HCT116 (cell line): ENCODE measurements at regions of chr13 and their contacts with region 1.

Region 1: DNA sequence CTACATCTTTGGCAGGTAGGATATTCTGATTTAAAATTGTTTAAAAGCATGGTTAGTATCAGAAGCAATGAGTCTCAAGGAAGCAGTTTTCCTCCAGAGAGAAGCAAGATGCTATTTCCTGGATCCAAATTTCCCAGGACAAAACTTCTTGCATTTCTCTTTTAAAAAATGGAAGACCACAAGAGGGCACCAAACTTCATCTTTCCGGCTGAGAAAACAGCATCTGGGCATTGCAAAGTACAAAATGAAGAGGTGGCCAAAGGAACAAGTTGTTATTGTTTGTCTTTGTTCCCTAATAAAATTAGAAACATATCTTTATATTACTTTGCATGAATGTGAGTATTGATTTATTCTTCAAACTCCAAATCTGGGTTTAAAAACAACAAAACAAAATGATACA is 60.0 kb upstream of the LRCH1 start:
- DNase-seq: peak; percentile 32
- ATAC-seq: peak; percentile 47
- H3K4me3 ChIP-seq: no peak overlapping the region
- H3K27ac ChIP-seq: no peak overlapping the region
- H3K4me1 ChIP-seq: no peaks in the 10 kb centered on the region; a peak in 1 of 4 replicates
- H3K27me3 ChIP-seq: no peaks in the 10 kb centered on the region
- CTCF ChIP-seq: peak; percentile 46 to 69 (median 46); a peak in 5 of 6 replicates
- POLR2A ChIP-seq: no peak
- RAD21 ChIP-seq: peak; percentile 77

Region 2: DNA sequence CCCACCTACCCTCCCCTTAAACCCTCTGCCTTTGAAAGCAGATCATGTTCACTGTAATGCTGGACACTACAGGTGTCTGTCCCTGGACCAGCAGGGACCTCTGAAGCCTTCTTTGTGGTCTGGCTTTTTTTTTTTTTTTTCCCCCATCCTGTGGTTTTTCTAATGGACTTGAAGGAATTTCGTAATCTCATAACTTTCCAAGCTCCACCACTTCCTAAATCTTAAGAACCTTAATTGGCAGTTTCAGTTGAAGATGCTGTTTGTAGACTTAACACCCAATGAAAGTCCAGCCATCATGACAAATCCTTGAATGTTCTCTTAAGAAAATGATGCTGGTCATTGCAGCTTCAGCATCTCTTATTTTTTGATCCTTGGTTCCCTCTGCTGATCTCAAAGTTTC is 15.0 kb after region 1 on chr13:
- CTCF ChIA-PET with region 1: no interaction called
- POLR2A ChIA-PET with region 1: no interaction called
- RAD21 ChIA-PET with region 1: no interaction called
- intact Hi-C with region 1: no loop called
- DNase-seq: no peak
- ATAC-seq: no peak
- H3K4me3 ChIP-seq: no peak overlapping the region
- H3K27ac ChIP-seq: no peak overlapping the region
- H3K4me1 ChIP-seq: no peaks in the 10 kb centered on the region
- H3K27me3 ChIP-seq: no peaks in the 10 kb centered on the region
- CTCF ChIP-seq: no peak
- POLR2A ChIP-seq: no peak
- RAD21 ChIP-seq: no peak

Region 3: GRCh38 chr13:46905247-46905646 is 412.3 kb after region 1 on chr13:
- CTCF ChIA-PET with region 1: no interaction called
- POLR2A ChIA-PET with region 1: no interaction called
- RAD21 ChIA-PET with region 1: no interaction called
- intact Hi-C with region 1: loop called (anchors 10 kb)
- DNase-seq: no peak
- ATAC-seq: peak; percentile 64
- H3K4me3 ChIP-seq: no peak overlapping the region
- H3K27ac ChIP-seq: no peak overlapping the region
- H3K4me1 ChIP-seq: no peaks in the 10 kb centered on the region
- H3K27me3 ChIP-seq: peaks cover 46% of the 10 kb centered on the region
- CTCF ChIP-seq: peak in 1 of 3 experiments; percentile 20; a peak in 1 of 6 replicates
- POLR2A ChIP-seq: no peak
- RAD21 ChIP-seq: peak; percentile 17; the same call in 1 of the 2 replicates